Breast epithelium (tissue), 4 donors: ENCODE measurements at regions of chr4 and their contacts with region 1.

Region 1: DNA sequence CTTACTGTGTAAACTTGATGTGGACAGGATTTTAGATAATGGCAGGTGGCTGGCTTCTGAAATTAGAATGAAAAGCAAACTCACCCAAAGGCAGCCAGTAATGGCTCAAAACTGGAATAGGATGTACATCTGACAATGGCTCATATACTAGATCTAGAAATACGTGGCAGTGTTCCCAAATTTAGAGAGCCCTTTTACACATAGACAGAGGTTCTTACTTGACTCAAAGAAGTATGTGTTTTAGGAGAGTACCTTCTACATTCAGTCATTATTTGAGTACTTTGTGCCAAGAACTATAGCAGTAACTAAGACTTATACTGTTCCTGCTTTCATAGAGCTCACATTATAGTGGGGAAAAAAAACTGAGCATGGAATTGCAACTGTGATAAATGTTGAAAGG is 48.0 kb downstream of the UBE2K start:
- DNase-seq: no peak
- H3K4me3 ChIP-seq: no peak overlapping the region
- H3K27ac ChIP-seq: no peak overlapping the region
- H3K4me1 ChIP-seq: no peaks in the 10 kb centered on the region
- H3K27me3 ChIP-seq: no peaks in the 10 kb centered on the region
- CTCF ChIP-seq: no peak
- POLR2A ChIP-seq: no peak

Region 2: DNA sequence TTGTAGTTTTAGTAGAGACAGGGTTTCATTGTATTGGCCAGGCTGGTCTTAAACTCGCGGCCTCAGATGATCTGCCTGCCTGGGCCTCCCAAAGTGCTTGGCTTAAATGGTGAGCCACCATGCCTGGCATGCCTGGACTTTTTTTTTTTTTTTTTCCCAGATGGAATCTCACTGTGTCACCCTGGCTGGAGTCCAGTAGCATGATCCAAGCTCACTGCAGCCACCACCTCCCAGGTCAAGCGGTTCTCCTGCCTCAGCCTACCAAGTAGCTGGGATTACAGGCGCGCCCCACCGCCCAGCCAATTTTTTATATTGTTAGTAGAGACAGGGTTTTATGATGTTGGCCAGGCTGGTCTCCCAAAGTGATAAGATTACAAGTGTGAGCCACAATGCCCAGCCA is 39.6 kb before region 1 on chr4:
- intact Hi-C with region 1: no loop called
- DNase-seq: peak in 1 of 2 donors; percentile 57
- H3K4me3 ChIP-seq: no peak overlapping the region
- H3K27ac ChIP-seq: no peak overlapping the region
- H3K4me1 ChIP-seq: peaks cover 0 to 2% of the 10 kb centered on the region in 2 donors
- H3K27me3 ChIP-seq: no peaks in the 10 kb centered on the region
- CTCF ChIP-seq: no peak
- POLR2A ChIP-seq: no peak

Region 3: GRCh38 chr4:41196633-41197332 is 1450.9 kb after region 1 on chr4:
- intact Hi-C with region 1: loop called (anchors 5 kb)
- DNase-seq: no peak
- H3K4me3 ChIP-seq: no peak overlapping the region
- H3K27ac ChIP-seq: peak overlapping the region in 1 of 2 donors; percentile 44
- H3K4me1 ChIP-seq: no peaks in the 10 kb centered on the region
- H3K27me3 ChIP-seq: no peaks in the 10 kb centered on the region
- CTCF ChIP-seq: no peak
- POLR2A ChIP-seq: no peak